ENCODE measurements at regions of chr3 and their contacts with region 1.

Region 1: DNA sequence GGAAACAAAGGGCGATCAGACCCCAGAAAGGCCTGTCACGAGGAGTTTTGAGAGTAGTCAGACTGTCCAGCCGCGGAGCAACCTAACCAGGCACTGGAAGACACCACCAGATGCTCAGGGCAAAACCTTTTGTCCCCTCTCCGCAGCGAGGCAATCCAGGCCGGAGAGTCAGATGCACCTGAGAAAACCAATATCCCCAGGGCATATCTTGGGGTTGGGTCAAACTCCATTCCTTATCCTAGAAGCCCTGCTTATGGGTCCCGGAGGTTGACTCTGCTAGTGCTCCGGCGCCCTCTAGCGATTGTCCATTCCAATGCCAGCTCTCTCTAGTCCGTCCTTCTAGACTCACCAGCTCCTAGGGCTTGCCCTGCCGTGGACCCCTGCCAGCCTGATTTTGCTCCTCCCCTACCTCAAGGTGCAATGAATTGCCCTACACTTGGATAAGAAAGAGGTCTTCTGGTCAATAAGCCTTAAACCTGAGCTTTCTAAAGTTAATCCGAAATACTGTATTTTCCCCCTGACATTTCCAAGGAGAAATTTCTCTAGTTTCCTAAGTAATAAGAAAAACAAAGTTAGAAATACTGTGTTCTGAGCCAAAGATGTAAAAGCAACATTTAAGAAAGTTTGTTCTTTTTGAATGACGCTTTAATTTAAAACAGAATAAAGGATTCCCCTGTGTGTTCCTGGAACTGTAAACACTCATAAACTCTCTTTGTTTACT is 5.5 kb downstream of the CPNE4 start:
- DNase-seq: peak; percentile 98
- ATAC-seq: peak; percentile 98
- H3K4me3 Mint-ChIP-seq: no peak overlapping the region
- H3K27ac Mint-ChIP-seq: no peak overlapping the region
- H3K4me1 Mint-ChIP-seq: peaks cover 21% of the 10 kb centered on the region
- H3K27me3 Mint-ChIP-seq: peaks cover 23% of the 10 kb centered on the region
- CTCF ChIP-seq: peak; percentile 75

Region 2: GRCh38 chr3:131549340-131549739 is 480.0 kb before region 1 on chr3:
- CTCF ChIA-PET with region 1: interaction called, 17 read pairs
- POLR2A ChIA-PET with region 1: no interaction called
- DNase-seq: no peak
- ATAC-seq: no peak
- H3K4me3 Mint-ChIP-seq: no peak overlapping the region
- H3K27ac Mint-ChIP-seq: no peak overlapping the region
- H3K4me1 Mint-ChIP-seq: peaks cover 11% of the 10 kb centered on the region
- H3K27me3 Mint-ChIP-seq: no peaks in the 10 kb centered on the region
- CTCF ChIP-seq: peak; percentile 45; the same call in 1 of the 2 replicates

Region 3: DNA sequence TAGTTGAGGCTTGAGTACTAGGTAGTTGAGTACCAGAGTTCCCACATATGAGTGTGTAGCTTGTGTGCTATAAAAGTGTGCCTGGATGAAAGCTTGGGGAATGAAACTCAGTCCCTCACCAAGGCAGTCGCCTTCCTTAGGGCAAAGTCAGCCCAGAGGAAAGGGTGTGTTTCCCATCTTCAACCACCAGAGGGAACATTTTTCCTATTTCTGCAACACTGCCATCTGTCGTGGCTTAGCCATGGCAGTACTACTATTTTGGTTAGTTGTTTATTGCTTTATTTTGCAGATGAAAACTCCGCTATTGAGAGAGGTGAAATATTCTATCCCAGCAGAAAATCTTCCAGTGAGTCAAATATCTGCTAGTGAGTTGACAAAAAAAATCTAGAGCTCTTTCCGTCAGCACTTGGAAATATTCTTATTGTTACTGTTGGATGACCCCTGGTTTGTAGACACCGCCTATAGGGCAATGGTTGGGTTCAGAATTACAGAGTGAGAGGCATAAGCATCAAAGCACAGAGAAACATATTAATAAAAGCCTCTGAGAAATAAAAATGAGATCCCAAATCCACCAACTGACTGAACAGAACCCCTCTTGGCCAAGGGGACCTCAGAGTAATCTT is 234.5 kb before region 1 on chr3:
- CTCF ChIA-PET with region 1: interaction called, 57 read pairs
- POLR2A ChIA-PET with region 1: no interaction called
- DNase-seq: peak; percentile 37
- ATAC-seq: peak; percentile 89
- H3K4me3 Mint-ChIP-seq: no peak overlapping the region
- H3K27ac Mint-ChIP-seq: no peak overlapping the region
- H3K4me1 Mint-ChIP-seq: peaks cover 38% of the 10 kb centered on the region
- H3K27me3 Mint-ChIP-seq: peaks cover 15% of the 10 kb centered on the region
- CTCF ChIP-seq: peak; percentile 77

Region 4: GRCh38 chr3:131892331-131892730 is 137.0 kb before region 1 on chr3:
- CTCF ChIA-PET with region 1: interaction called, 13 read pairs
- POLR2A ChIA-PET with region 1: no interaction called
- DNase-seq: no peak
- ATAC-seq: no peak
- H3K4me3 Mint-ChIP-seq: no peak overlapping the region
- H3K27ac Mint-ChIP-seq: no peak overlapping the region
- H3K4me1 Mint-ChIP-seq: peaks cover 4% of the 10 kb centered on the region; the same call in 1 of the 2 replicates
- H3K27me3 Mint-ChIP-seq: no peaks in the 10 kb centered on the region
- CTCF ChIP-seq: no peak

Region 5: GRCh38 chr3:132006605-132007204 is 22.6 kb before region 1 on chr3:
- CTCF ChIA-PET with region 1: interaction called, 18 read pairs
- POLR2A ChIA-PET with region 1: no interaction called
- DNase-seq: peak; percentile 60
- ATAC-seq: peak; percentile 80
- H3K4me3 Mint-ChIP-seq: no peak overlapping the region
- H3K27ac Mint-ChIP-seq: no peak overlapping the region
- H3K4me1 Mint-ChIP-seq: peaks cover 35% of the 10 kb centered on the region
- H3K27me3 Mint-ChIP-seq: no peaks in the 10 kb centered on the region
- CTCF ChIP-seq: peak; percentile 54

Measured in WTC11 (cell line).